Natural killer cell (primary cell): ENCODE measurements at regions of chr3 and their contacts with region 1.

Region 1: GRCh38 chr3:136250226-136250902 is at the start of gene PCCB:
- DNase-seq: peak; percentile 87 to 94
- ATAC-seq: peak; percentile 93 to 98 (median 94)
- H3K4me3 ChIP-seq: peak within 1 kb of the TSS; percentile 58
- H3K4me3 Mint-ChIP-seq: peak within 1 kb of the TSS; percentile 90
- H3K27ac ChIP-seq: peak within 1 kb of the TSS; percentile 63
- H3K27ac Mint-ChIP-seq: peak within 1 kb of the TSS; percentile 90 to 93
- H3K4me1 ChIP-seq: peaks cover 14% of the 10 kb centered on the region
- H3K4me1 Mint-ChIP-seq: peaks cover 20 to 30% of the 10 kb centered on the region in 2 donors
- H3K27me3 ChIP-seq: no peaks in the 10 kb centered on the region
- H3K27me3 Mint-ChIP-seq: no peaks in the 10 kb centered on the region
- CTCF ChIP-seq: peak; percentile 89
- total RNA-seq, gene PCCB: 17.7 to 19.9 (median 17.8) TPM

Region 2: DNA sequence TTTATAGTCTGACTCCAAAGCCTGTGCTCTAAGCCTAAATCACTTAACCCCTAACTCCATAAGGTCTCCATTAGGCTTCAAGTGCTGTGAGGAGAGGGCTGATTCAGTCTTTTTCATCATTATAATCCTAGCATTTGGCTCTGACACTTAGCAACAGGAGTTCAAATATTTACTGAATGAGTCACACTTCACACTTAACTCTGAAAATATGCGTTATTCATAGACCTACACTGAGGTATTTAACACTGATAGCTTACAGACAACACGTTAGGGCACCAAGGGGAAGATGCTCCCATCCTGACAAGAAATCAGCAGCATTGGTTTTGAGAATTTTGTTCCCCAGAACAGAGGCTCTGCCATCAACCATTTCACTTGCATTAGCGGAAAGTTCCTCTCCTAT is 107.8 kb before region 1 on chr3:
- intact Hi-C with region 1: loop called (anchors 2 kb)
- DNase-seq: no peak
- ATAC-seq: peak in 2 of 3 donors; percentile 59 to 81
- H3K4me3 ChIP-seq: no peak overlapping the region
- H3K4me3 Mint-ChIP-seq: no peak overlapping the region
- H3K27ac ChIP-seq: no peak overlapping the region
- H3K27ac Mint-ChIP-seq: peak overlapping the region; percentile 61 to 72
- H3K4me1 ChIP-seq: no peaks in the 10 kb centered on the region
- H3K4me1 Mint-ChIP-seq: peaks cover 38 to 40% of the 10 kb centered on the region in 2 donors
- H3K27me3 ChIP-seq: no peaks in the 10 kb centered on the region
- H3K27me3 Mint-ChIP-seq: no peaks in the 10 kb centered on the region
- CTCF ChIP-seq: no peak